Esophagus muscularis mucosa (tissue), 4 donors: ENCODE measurements at regions of chr15 and their contacts with region 1.

Region 1: DNA sequence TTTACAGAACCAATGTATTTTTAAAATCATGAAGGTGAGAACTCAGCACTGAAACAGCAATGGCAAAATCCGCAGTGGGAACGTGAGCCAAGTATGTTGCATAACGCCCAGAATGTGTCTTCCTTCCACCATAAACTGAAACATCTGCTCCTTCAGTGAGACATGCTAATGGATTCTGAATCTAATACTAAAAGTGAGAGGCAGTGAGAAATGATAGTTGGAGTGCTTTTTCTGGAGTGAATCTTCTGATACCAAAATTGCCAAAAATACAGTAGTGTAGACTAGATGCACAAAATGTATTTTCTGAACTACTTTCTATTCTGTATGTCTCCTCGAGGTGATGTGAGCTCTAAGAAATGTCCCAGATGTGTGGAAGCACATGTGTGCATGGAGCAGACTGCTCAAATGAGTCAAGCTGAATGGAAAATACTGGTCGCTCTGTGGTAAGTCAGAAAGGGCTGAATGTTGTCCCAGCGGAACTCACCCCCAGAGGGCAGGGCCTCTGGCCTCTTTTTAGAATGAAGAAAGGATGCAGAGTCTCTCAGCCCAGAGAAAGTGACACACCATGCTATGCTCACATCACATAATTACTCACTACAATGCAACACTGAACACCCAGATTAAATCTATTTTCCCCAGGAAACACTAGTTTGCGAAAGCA is 73.0 kb downstream of the ATP10A start:
- DNase-seq: peak; percentile 95
- H3K4me3 ChIP-seq: peak overlapping the region in 1 of 4 donors; percentile 2
- H3K27ac ChIP-seq: peak overlapping the region; percentile 83 to 92 (median 87)
- H3K4me1 ChIP-seq: peaks cover 37 to 99% (median 95%) of the 10 kb centered on the region in 4 donors
- H3K27me3 ChIP-seq: no peaks in the 10 kb centered on the region
- CTCF ChIP-seq: peak in 1 of 3 experiments; percentile 25
- EP300 ChIP-seq: no peak
- POLR2A ChIP-seq: no peak

Region 2: GRCh38 chr15:25670025-25670554 is 120.0 kb before region 1 on chr15:
- intact Hi-C with region 1: loop called (anchors 5 kb)
- DNase-seq: no peak
- H3K4me3 ChIP-seq: peak overlapping the region; percentile 13 to 39 (median 28)
- H3K27ac ChIP-seq: peak overlapping the region; percentile 85 to 94 (median 90)
- H3K4me1 ChIP-seq: peaks cover 21 to 73% (median 68%) of the 10 kb centered on the region in 4 donors
- H3K27me3 ChIP-seq: no peaks in the 10 kb centered on the region
- CTCF ChIP-seq: no peak
- EP300 ChIP-seq: no peak
- POLR2A ChIP-seq: no peak

Region 3: GRCh38 chr15:25829073-25829472 is 38.9 kb after region 1 on chr15:
- intact Hi-C with region 1: loop called (anchors 5 kb)
- DNase-seq: no peak
- H3K4me3 ChIP-seq: no peak overlapping the region
- H3K27ac ChIP-seq: peak overlapping the region; percentile 87 to 94 (median 92)
- H3K4me1 ChIP-seq: peaks cover 6 to 65% (median 57%) of the 10 kb centered on the region in 4 donors
- H3K27me3 ChIP-seq: no peaks in the 10 kb centered on the region
- CTCF ChIP-seq: no peak
- EP300 ChIP-seq: no peak
- POLR2A ChIP-seq: no peak

Region 4: DNA sequence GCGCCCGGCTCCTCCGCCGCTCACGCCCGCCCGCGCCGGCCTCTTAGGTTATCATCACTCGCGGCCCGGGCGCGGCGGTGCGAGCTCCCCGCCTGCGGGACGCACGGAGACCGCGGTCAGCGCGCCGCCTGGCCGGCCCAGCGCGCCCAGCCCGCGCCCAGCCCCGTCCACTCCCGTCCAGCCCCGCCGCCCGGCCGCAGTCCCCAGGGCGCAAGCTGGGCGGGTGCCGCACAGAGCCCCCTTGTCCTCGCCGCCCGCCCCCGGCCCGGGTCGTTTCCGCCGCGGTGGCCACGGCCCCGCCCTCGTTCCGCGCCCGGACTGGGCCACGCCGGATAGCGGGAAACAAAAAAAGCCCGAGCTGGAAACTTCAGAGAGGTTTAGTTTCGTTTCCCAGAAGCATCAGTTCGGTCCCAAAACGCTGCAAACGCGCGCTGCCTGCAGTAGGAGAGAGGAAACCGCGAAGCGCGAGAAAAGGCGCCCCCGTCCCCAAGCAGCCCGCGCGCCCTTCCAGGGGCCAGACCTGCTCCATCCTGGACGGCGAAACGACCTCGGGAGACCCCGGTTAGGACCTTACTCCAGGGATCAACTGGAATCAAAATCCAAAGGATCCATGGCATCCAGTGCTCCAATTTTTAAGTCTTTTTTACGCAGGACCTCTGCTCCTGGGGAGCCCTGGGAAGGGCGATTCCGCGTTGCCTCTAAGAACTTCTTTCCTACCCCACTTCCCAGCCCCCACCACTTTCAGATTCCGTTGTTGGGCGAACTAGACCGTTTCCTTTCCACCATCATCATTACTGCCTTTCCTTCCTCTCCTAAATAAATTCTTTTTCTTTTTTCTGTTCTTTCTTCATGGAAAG is 73.2 kb after region 1 on chr15 and contains the start of gene ATP10A:
- intact Hi-C with region 1: loop called (anchors 2 kb)
- DNase-seq: no peak
- H3K4me3 ChIP-seq: peak within 1 kb of the TSS; percentile 73 to 91 (median 78)
- H3K27ac ChIP-seq: peak within 1 kb of the TSS; percentile 91 to 97 (median 94)
- H3K4me1 ChIP-seq: peaks cover 9 to 60% (median 46%) of the 10 kb centered on the region in 4 donors
- H3K27me3 ChIP-seq: no peaks in the 10 kb centered on the region
- CTCF ChIP-seq: no peak
- EP300 ChIP-seq: peak; percentile 35
- POLR2A ChIP-seq: no peak
- total RNA-seq, gene ATP10A: 23.9 to 51.9 (median 32.6) TPM